Posterior vena cava (tissue), 2 donors: ENCODE measurements at regions of chr10 and their contacts with region 1.

Region 1: GRCh38 chr10:22752272-22752889 is 38.0 kb upstream of the PIP4K2A start:
- DNase-seq: no peak

Region 2: GRCh38 chr10:22712956-22713852 is 39.2 kb before region 1 on chr10:
- intact Hi-C with region 1: loop called in 1 of 2 experiments (anchors 1 kb)
- DNase-seq: peak; percentile 84